Colonic mucosa (tissue), 4 donors: ENCODE measurements at regions of chr17 and their contacts with region 1.

Region 1: DNA sequence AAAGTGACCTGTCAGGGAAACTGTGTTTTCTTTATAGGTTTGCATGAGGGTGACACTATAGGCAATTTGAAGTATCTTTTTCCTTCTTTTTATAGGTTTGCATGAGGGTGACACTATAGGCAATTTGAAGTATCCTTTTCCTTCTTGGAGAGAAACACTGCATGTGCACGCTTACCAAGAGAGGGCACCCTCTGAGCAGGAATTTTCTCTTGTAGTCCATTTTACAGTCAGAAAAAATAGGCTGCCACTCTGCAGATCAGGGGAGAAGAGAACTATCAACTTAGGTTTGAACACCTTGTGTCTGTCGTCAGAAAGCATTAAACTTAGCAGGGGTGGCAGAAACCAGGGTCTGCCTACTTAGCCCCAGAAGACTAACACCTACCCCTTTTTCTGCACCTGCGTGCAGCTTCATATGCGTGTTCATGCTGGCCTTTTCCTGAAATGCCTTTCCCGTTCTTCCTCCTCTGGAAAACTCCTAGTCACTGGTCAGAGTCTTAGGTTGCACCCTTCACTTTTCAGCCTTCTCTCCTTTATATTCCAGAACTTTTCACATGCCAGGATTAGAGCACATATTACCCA is 16.4 kb upstream of the SMIM36 start:
- DNase-seq: no peak
- H3K4me3 ChIP-seq: no peak overlapping the region
- H3K27ac ChIP-seq: no peak overlapping the region
- H3K4me1 ChIP-seq: no peaks in the 10 kb centered on the region
- H3K27me3 ChIP-seq: no peaks in the 10 kb centered on the region
- CTCF ChIP-seq: no peak

Region 2: GRCh38 chr17:55601874-55602364 is 74.3 kb after region 1 on chr17:
- intact Hi-C with region 1: loop called (anchors 5 kb)
- DNase-seq: no peak
- H3K4me3 ChIP-seq: no peak overlapping the region
- H3K27ac ChIP-seq: no peak overlapping the region
- H3K4me1 ChIP-seq: no peaks in the 10 kb centered on the region
- H3K27me3 ChIP-seq: no peaks in the 10 kb centered on the region
- CTCF ChIP-seq: peak; percentile 52

Region 3: GRCh38 chr17:55717898-55718735 is 190.5 kb after region 1 on chr17:
- intact Hi-C with region 1: loop called (anchors 5 kb)
- DNase-seq: peak; percentile 82
- H3K4me3 ChIP-seq: no peak overlapping the region
- H3K27ac ChIP-seq: no peak overlapping the region
- H3K4me1 ChIP-seq: no peaks in the 10 kb centered on the region
- H3K27me3 ChIP-seq: no peaks in the 10 kb centered on the region
- CTCF ChIP-seq: peak; percentile 69

Region 4: DNA sequence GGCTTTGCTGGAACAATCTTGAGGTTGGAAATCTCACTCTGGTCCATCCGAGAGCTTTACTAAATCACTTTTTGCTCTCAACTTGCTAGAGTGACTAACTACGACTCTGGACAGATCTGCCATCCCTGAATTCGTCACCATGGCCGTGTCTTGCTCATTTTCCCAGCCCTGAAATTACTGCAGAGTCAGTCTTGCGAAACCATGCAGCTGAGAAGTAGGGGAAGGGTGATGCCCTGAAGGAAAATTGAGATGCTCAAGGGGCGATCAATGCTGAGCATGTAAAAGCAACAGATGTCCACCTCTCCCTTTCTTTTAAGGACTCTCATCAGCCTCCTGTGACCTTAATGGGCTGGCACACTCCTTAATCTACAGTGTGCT is 242.0 kb after region 1 on chr17:
- intact Hi-C with region 1: loop called (anchors 2 kb)
- DNase-seq: no peak
- H3K4me3 ChIP-seq: no peak overlapping the region
- H3K27ac ChIP-seq: no peak overlapping the region
- H3K4me1 ChIP-seq: no peaks in the 10 kb centered on the region
- H3K27me3 ChIP-seq: no peaks in the 10 kb centered on the region
- CTCF ChIP-seq: no peak